Heart right ventricle (tissue), 16 donors: ENCODE measurements at regions of chr14 and their contacts with region 1.

Region 1: GRCh38 chr14:77707724-77708408 is at the starts of genes ALKBH1 and SLIRP:
- DNase-seq: peak; percentile 84 to 91
- ATAC-seq: peak; percentile 95 to 99 (median 98)
- H3K4me3 ChIP-seq: peak within 1 kb of the TSS; percentile 70 to 99 (median 92)
- H3K27ac ChIP-seq: peak within 1 kb of the TSS in 9 of 10 donors; percentile 41 to 86 (median 74)
- H3K4me1 ChIP-seq: peaks cover 3 to 41% (median 30%) of the 10 kb centered on the region in 9 donors
- H3K27me3 ChIP-seq: no peaks in the 10 kb centered on the region
- CTCF ChIP-seq: no peak
- total RNA-seq, gene ALKBH1: 8.5 to 12.9 (median 11.6) TPM
- total RNA-seq, gene SLIRP: 132 to 231 (median 157) TPM

Region 2: GRCh38 chr14:77469539-77469938 is 238.3 kb before region 1 on chr14:
- intact Hi-C with region 1: loop called in 1 of 10 experiments (anchors 10 kb)
- DNase-seq: no peak
- ATAC-seq: no peak
- H3K4me3 ChIP-seq: no peak overlapping the region
- H3K27ac ChIP-seq: no peak overlapping the region
- H3K4me1 ChIP-seq: no peaks in the 10 kb centered on the region
- H3K27me3 ChIP-seq: peaks cover 0 to 1% (median 0%) of the 10 kb centered on the region in 7 donors
- CTCF ChIP-seq: no peak

Region 3: GRCh38 chr14:77654001-77654441 is 53.8 kb before region 1 on chr14:
- intact Hi-C with region 1: loop called in 6 of 10 experiments (anchors 2 to 10 kb)
- DNase-seq: no peak
- ATAC-seq: no peak
- H3K4me3 ChIP-seq: no peak overlapping the region
- H3K27ac ChIP-seq: peak overlapping the region in 1 of 10 donors; percentile 1
- H3K4me1 ChIP-seq: peaks cover 0 to 27% (median 3%) of the 10 kb centered on the region in 9 donors
- H3K27me3 ChIP-seq: no peaks in the 10 kb centered on the region
- CTCF ChIP-seq: no peak

Region 4: GRCh38 chr14:77659831-77660230 is 48.0 kb before region 1 on chr14:
- intact Hi-C with region 1: loop called in 5 of 10 experiments (anchors 2 to 10 kb)
- DNase-seq: no peak
- ATAC-seq: peak in 1 of 8 donors; percentile 34
- H3K4me3 ChIP-seq: no peak overlapping the region
- H3K27ac ChIP-seq: peak overlapping the region in 1 of 10 donors; percentile 79
- H3K4me1 ChIP-seq: peaks cover 0 to 38% (median 3%) of the 10 kb centered on the region in 9 donors
- H3K27me3 ChIP-seq: peaks cover 0 to 6% (median 0%) of the 10 kb centered on the region in 7 donors
- CTCF ChIP-seq: no peak

Region 5: GRCh38 chr14:77760381-77761246 is 52.7 kb after region 1 on chr14 and contains the start of gene SNW1:
- intact Hi-C with region 1: loop called in 1 of 10 experiments (anchors 2 kb)
- DNase-seq: peak; percentile 90 to 93
- ATAC-seq: peak; percentile 96 to 99 (median 98)
- H3K4me3 ChIP-seq: peak within 1 kb of the TSS; percentile 70 to 97 (median 90)
- H3K27ac ChIP-seq: peak within 1 kb of the TSS; percentile 74 to 98 (median 94)
- H3K4me1 ChIP-seq: peaks cover 0 to 48% (median 35%) of the 10 kb centered on the region in 9 donors
- H3K27me3 ChIP-seq: no peaks in the 10 kb centered on the region
- CTCF ChIP-seq: peak in 1 of 9 donors; percentile 9
- total RNA-seq, gene SNW1: 46.8 to 69.1 (median 56.2) TPM